ENCODE measurements at regions of chr3 and their contacts with region 1.

Region 1: GRCh38 chr3:182490596-182491491 is 302.5 kb upstream of the ATP11B start:
- DNase-seq: peak in 1 of 10 donors; percentile 23

Region 2: DNA sequence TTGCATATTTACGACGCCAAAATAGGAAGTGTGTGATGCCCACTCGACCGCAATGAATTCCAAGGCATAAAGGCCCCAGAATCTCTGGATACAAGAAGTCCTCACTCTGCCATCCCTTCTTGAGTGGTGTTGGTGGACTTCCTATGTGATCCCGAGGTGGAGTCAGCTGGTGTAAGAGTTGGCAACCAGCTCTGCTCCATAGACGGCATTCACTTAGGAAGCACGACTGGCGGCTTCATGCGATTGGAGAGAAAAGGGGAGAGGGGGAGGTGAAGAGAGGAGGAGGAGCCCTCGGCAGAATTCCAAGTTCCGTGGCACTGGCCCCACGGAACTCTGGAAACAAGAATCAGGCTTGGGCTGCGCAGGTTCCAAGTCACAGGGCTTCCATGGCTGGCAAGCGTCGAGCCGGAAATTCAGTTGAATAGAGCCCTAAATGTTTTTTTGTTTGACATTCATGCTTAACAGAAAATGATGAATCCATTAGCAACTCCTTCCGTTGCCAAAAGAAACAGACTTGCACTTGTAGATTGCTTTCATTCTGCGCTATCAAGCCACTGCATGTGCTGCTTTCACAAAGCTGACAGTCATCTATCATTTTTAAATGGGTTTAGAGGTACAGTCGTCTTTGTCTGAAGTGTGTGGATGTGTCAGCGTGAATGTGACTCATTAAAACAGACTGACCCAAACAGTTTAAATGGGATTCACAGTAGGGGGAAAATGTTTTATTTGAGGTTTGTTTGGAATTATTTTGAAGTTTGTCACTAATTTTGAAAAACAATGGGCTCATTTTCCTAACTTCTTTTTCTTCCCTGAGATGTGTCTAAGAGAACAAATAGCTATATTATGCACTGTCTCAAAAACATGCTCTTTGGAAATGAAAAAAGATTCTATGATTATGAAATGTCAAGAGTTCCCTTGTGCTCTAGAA is 125.9 kb before region 1 on chr3:
- intact Hi-C with region 1: loop called (anchors 10 kb)
- DNase-seq: peak; percentile 46 to 91 (median 66)